Heart left ventricle (tissue), 16 donors: ENCODE measurements at regions of chr3 and their contacts with region 1.

Region 1: GRCh38 chr3:121545574-121546455 is at the start of gene POLQ:
- DNase-seq: peak; percentile 87 to 93 (median 92)
- ATAC-seq: peak; percentile 98 to 99 (median 99)
- H3K4me3 ChIP-seq: peak within 1 kb of the TSS; percentile 33 to 80 (median 62)
- H3K27ac ChIP-seq: peak within 1 kb of the TSS; percentile 38 to 92 (median 68)
- H3K4me1 ChIP-seq: peaks cover 0 to 15% (median 6%) of the 10 kb centered on the region in 12 donors
- H3K27me3 ChIP-seq: no peaks in the 10 kb centered on the region
- CTCF ChIP-seq: no peak
- POLR2A ChIP-seq: no peak
- total RNA-seq, gene POLQ: 0.13 to 1.5 (median 0.39) TPM

Region 2: DNA sequence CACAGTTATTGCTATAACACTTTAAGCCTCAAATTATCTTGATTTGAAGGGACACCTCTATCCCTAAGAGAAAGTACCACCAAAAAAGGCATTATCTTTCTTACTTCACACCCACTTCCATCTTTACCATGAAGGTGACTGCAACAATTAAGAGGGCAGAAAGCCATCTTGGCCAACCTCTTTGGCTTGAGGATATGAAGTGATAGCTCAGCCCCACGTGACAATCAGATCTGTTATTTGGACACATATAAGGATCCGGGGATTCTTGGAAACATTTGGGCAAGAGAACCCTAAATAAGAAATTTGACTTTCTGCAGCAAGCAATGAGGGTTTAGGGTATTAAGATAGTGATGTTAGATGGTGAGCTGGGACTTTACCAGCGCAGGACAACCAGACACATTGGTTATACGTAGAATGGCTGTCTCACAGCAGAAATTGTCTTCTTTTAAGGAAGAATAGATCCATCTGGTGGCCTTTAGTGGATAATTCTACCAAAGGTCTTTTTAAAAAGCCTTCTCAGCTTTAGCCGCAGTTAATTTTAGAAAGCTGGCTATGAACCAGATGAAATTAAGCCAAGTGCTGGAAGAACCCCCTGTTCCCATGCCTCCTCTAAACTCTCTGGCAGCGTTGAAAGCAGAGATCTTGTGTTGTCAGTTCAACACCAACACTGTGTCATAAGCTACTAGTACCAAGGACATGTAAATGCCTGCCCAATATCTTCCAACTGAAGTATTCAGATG is 102.6 kb after region 1 on chr3:
- intact Hi-C with region 1: loop called in 8 of 10 experiments (anchors 1 to 10 kb)
- DNase-seq: peak in 4 of 5 donors; percentile 41 to 68 (median 55)
- ATAC-seq: peak; percentile 98 to 99 (median 99)
- H3K4me3 ChIP-seq: no peak overlapping the region
- H3K27ac ChIP-seq: peak overlapping the region; percentile 39 to 88 (median 74)
- H3K4me1 ChIP-seq: peaks cover 0 to 20% (median 9%) of the 10 kb centered on the region in 12 donors
- H3K27me3 ChIP-seq: no peaks in the 10 kb centered on the region
- CTCF ChIP-seq: peak in 7 of 12 donors; percentile 8 to 45 (median 24)
- POLR2A ChIP-seq: no peak

Region 3: DNA sequence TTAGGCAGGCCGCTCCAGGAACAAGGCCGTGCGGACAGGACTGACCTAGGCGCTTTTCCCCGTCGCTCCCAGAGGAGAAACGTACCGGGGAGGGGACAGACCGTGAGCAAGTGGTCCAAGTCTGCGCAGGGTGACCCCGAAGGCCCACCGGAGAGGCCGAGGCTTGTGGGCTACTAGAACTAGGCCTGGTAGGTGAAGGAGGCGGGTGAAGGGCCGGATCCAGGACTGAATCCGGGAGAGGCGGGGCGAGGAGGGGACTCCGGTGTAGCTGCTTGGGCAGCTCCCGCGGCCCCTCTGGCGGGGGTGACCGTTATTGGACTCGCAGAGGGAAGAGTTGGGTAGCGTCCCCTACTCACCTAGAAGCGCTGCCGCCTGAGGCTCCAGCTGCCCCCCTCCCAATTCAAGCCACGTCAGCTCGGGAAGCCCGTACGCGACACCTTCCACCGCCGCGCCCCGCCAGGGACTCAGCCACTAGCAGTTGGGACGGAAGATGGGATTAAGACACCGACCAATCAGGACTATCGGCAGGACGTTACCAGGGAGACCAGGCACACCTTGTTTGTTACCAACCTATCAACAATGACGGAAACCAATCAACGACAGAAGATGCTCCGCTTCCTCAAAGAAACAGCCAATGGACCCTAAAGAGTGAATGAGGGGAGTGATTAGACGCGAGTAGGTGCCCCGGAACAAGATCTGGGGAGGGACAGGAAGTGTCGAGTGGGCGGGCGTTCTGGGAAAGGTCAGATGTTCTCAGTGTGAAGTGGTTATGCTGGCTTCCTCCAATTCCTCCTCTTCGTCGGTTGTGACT is 203.7 kb after region 1 on chr3 and contains the start of gene GOLGB1:
- intact Hi-C with region 1: loop called in 1 of 10 experiments (anchors 5 kb)
- DNase-seq: peak; percentile 92 to 96 (median 94)
- ATAC-seq: peak; percentile 99
- H3K4me3 ChIP-seq: peak within 1 kb of the TSS; percentile 68 to 95 (median 86)
- H3K27ac ChIP-seq: peak within 1 kb of the TSS; percentile 81 to 96 (median 92)
- H3K4me1 ChIP-seq: peaks cover 0 to 49% (median 36%) of the 10 kb centered on the region in 12 donors
- H3K27me3 ChIP-seq: no peaks in the 10 kb centered on the region
- CTCF ChIP-seq: peak in 2 of 12 donors; percentile 6 to 18
- POLR2A ChIP-seq: peak; percentile 75 to 99
- total RNA-seq, gene GOLGB1: 28.5 to 90.9 (median 44.9) TPM

Region 4: GRCh38 chr3:121995161-121996137 is 449.6 kb after region 1 on chr3:
- intact Hi-C with region 1: loop called in 7 of 10 experiments (anchors 1 to 10 kb)
- DNase-seq: peak; percentile 47 to 72 (median 52)
- ATAC-seq: peak; percentile 47 to 83 (median 77)
- H3K4me3 ChIP-seq: no peak overlapping the region
- H3K27ac ChIP-seq: peak overlapping the region in 4 of 12 donors; percentile 19 to 89 (median 38)
- H3K4me1 ChIP-seq: peaks cover 0 to 55% (median 0%) of the 10 kb centered on the region in 12 donors
- H3K27me3 ChIP-seq: no peaks in the 10 kb centered on the region
- CTCF ChIP-seq: peak; percentile 21 to 63 (median 43)
- POLR2A ChIP-seq: no peak

Region 5: GRCh38 chr3:122268257-122269024 is 722.6 kb after region 1 on chr3:
- intact Hi-C with region 1: loop called in 1 of 10 experiments (anchors 10 kb)
- DNase-seq: no peak
- ATAC-seq: no peak
- H3K4me3 ChIP-seq: no peak overlapping the region
- H3K27ac ChIP-seq: no peak overlapping the region
- H3K4me1 ChIP-seq: peaks cover 0 to 7% (median 0%) of the 10 kb centered on the region in 12 donors
- H3K27me3 ChIP-seq: peaks cover 0 to 4% (median 0%) of the 10 kb centered on the region in 9 donors
- CTCF ChIP-seq: no peak
- POLR2A ChIP-seq: no peak

Region 6: GRCh38 chr3:122365073-122365472 is 819.3 kb after region 1 on chr3:
- intact Hi-C with region 1: loop called in 1 of 10 experiments (anchors 10 kb)
- DNase-seq: no peak
- ATAC-seq: no peak
- H3K4me3 ChIP-seq: no peak overlapping the region
- H3K27ac ChIP-seq: no peak overlapping the region
- H3K4me1 ChIP-seq: no peaks in the 10 kb centered on the region
- H3K27me3 ChIP-seq: no peaks in the 10 kb centered on the region
- CTCF ChIP-seq: no peak
- POLR2A ChIP-seq: no peak

Region 7: DNA sequence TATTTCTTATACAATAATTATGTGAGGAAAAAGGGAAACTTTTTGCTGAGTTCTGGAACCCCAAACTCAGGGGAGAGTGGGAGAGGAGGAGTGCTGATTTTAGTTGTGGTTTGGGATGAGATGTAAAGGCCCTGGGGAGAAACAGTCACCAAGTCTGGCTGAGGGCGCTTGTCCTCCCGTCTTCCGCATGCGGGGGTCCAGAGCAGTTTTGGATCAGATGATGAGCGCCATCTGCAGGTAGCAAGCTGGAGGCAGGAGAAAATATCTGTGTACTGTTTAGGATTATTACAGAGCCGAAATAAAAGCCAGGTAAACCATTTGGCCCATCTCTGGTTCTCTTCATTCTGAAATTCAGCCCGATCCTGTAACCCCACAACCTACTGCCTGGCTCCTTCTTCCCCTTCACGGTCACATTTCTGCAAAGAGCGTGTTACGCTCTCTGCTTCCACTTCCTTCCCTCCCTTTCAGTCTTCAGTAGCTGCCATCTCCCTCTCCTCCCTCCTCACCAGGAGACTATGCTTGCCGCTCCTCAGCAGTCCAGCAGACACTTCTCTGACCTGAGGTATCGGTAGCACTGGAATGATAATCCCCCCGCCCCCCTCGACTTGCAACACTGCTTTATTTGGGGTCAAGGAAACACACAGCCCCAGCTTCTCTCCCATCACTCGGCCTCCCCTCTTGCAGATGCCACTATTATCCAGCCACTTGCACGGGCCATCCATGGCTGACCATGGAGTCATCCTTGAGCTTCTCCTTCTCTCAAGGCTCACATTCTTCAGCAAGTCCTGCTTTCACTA is 1133.5 kb after region 1 on chr3:
- intact Hi-C with region 1: loop called in 6 of 10 experiments (anchors 5 to 10 kb)
- DNase-seq: peak; percentile 81 to 88 (median 84)
- ATAC-seq: peak; percentile 62 to 79 (median 77)
- H3K4me3 ChIP-seq: peak overlapping the region in 10 of 12 donors; percentile 3 to 92 (median 76)
- H3K27ac ChIP-seq: peak overlapping the region; percentile 76 to 96 (median 94)
- H3K4me1 ChIP-seq: peaks cover 0 to 55% (median 20%) of the 10 kb centered on the region in 12 donors
- H3K27me3 ChIP-seq: no peaks in the 10 kb centered on the region
- CTCF ChIP-seq: peak; percentile 69 to 89 (median 82)
- POLR2A ChIP-seq: no peak